ENCODE measurements at regions of chr17 and their contacts with region 1.

Region 1: GRCh38 chr17:35022536-35023063 is 40.9 kb downstream of the RFFL start:
- DNase-seq: peak; percentile 87
- ATAC-seq: peak; percentile 100
- H3K4me3 Mint-ChIP-seq: peak overlapping the region; percentile 66
- H3K27ac Mint-ChIP-seq: peak overlapping the region; percentile 98
- H3K4me1 Mint-ChIP-seq: peaks cover 40% of the 10 kb centered on the region
- H3K27me3 Mint-ChIP-seq: no peaks in the 10 kb centered on the region

Region 2: DNA sequence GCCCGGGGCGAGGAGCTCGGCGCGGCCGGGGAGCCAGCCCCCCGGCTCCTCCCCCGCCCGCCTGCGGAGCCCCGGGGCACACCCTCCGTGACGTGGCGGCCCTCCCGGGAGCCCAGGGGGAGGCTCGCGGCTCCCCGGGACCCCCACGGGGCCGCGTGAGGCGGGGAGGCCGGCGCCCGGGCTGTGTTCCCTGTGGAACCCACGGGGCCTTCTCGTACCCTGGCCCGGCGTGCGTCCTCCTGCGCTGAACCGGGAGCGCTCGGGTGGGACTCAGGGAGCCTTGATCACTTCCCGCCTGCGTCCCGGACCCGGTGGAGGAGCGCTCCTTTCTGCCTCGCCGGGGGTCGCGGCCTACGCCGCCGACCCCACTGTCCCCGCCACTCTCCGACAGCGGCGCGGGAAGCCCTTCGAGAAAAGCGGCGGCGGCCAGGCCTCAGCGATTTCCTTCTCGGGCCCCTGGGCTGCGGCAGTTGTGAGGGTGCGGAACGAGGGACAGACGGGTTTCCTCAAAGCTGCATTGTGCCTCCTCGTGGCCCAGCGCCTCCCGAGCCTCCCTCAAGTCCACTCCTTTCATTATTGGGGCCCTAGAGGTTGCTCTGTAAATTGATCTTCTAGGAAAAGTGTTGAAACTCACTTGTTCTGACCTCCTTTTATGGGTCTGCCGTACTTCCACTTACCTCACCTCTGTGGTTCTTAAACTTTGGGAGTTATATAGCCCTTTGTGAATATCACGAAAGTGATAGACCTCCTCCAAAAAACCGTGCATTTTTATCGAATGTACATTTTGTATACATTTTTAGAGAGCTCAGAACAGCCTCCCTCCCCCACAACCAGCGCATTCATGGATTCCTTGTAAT is 41.7 kb before region 1 on chr17:
- CTCF ChIA-PET with region 1: no interaction called
- POLR2A ChIA-PET with region 1: interaction called, 13 read pairs
- DNase-seq: peak; percentile 85
- ATAC-seq: peak; percentile 89
- H3K4me3 Mint-ChIP-seq: peak overlapping the region; percentile 79
- H3K27ac Mint-ChIP-seq: peak overlapping the region; percentile 85
- H3K4me1 Mint-ChIP-seq: peaks cover 32% of the 10 kb centered on the region
- H3K27me3 Mint-ChIP-seq: no peaks in the 10 kb centered on the region

Region 3: GRCh38 chr17:35006953-35007352 is 15.6 kb before region 1 on chr17:
- CTCF ChIA-PET with region 1: interaction called, 10 read pairs
- POLR2A ChIA-PET with region 1: interaction called, 8 read pairs
- DNase-seq: no peak
- ATAC-seq: no peak
- H3K4me3 Mint-ChIP-seq: no peak overlapping the region
- H3K27ac Mint-ChIP-seq: no peak overlapping the region
- H3K4me1 Mint-ChIP-seq: no peaks in the 10 kb centered on the region
- H3K27me3 Mint-ChIP-seq: no peaks in the 10 kb centered on the region

Region 4: DNA sequence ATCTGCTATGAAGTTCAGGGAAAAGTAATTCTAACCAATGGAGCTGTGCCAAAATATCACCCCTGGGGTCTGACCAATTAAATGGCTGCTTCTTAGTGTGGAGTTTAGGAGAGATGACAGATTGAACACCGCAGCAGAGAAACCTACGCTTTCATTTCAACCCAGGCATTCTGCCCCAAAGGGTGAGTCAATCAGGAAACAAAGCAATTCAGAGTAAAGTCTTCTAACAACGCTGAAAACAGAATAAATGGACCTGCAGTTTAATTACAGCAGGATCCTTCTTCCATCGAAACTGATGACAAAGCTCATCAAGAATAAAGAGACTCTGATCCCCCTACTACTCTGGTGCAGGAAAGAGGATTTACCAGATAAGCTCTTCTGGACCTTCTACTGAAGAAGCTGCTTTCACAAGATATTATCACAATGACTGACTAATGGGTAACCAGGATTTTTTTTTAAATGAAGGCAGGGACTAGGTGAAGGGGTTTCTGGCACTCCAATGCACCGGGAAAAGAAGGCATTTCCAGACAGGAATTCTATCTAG is 24.2 kb after region 1 on chr17:
- CTCF ChIA-PET with region 1: interaction called, 15 read pairs
- POLR2A ChIA-PET with region 1: interaction called, 32 read pairs
- DNase-seq: peak; percentile 78
- ATAC-seq: peak; percentile 95
- H3K4me3 Mint-ChIP-seq: peak overlapping the region; percentile 69
- H3K27ac Mint-ChIP-seq: peak overlapping the region; percentile 83
- H3K4me1 Mint-ChIP-seq: peaks cover 49% of the 10 kb centered on the region
- H3K27me3 Mint-ChIP-seq: no peaks in the 10 kb centered on the region

Region 5: DNA sequence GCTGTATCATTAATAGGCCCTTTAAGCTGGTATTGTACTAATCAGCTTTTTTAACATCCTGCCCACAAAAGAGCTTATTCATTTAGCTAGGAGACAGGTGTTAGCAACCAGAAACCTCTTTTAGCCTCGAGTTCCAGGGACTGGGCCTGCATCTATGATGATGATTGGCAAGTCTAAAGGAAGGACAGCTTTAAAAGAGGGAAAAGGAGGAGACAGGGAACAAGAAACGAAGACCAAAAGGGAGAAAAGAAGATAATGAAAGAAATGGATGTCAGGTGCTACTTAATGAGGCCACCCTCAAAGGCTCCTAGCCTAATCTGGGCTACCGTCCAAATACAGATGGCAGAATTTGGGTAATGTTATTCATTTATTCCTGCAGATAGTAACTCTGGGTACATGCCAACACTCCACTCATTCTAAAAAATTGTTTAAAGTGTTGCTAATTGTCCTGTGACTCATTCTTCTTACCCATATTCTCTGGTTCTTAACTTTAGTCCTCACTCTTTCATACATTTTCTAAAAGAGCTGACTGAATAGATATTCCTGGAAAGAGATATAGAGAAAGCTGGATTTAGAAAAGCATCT is 59.6 kb after region 1 on chr17:
- CTCF ChIA-PET with region 1: interaction called, 13 read pairs
- POLR2A ChIA-PET with region 1: interaction called, 10 read pairs
- DNase-seq: no peak
- ATAC-seq: no peak
- H3K4me3 Mint-ChIP-seq: peak overlapping the region; percentile 53
- H3K27ac Mint-ChIP-seq: peak overlapping the region; percentile 84
- H3K4me1 Mint-ChIP-seq: peaks cover 63% of the 10 kb centered on the region
- H3K27me3 Mint-ChIP-seq: no peaks in the 10 kb centered on the region